ENCODE measurements at regions of chr1 and their contacts with region 1.

Region 1: GRCh38 chr1:160108888-160109662 is 6.5 kb upstream of the ATP1A2 start:
- DNase-seq: peak; percentile 69

Region 2: DNA sequence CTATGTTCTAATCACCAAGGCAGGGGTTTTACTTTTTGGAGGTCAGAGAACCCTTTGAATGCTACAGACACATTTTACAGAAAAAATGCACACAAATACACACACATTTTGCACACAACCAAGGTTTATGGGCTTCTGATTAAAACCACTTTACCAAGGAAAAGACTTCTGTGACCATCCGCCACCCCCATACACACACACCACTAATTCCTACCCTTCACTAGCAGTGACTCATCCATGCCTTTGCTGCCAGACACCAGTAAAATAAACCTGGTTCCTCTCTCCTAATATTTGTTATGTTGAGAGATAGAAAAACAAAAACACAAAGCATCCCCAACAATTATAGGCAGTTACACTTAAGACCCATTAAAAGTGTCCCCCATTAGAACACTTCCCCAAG is 90.2 kb before region 1 on chr1:
- CTCF ChIA-PET with region 1: no interaction called
- POLR2A ChIA-PET with region 1: no interaction called
- DNase-seq: no peak

Region 3: DNA sequence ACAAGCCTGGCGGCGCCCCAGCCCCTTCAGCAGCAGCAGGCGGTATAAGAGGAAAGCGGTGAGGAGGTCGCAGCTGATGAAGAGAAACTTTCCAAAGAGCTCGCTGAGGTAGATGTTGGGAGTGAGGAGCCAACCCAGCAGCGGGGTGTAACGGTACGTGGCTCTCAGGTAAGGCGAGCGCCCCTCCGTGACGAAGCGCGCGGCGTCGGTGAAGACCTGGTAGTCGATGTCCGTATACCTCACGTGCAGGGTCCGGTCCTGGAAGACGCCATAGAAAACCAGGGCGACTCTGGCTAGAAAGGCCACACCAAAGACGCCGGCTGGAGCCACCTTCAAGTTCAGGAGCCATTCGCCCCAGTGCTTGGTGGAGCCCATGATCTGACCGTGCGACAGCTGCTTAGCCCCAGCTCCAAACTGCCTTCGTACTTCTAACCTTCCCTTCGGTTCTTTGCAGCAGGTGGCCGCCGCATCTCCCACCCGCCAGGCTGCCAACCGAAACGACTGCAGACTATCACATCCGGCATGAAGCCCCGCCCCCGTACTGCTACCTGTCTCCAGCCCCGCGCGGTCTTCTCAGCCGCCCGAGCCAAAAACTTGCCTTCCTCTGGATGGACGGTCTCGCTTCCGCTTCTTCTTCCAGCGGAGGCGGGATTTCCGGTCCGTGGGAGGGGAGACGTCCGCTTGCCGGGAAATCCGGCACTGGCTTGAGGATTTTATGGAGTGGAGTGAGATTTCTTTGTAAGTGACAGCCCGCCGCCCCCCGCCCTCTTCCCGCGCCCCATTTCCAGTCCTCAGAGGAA is 77.5 kb before region 1 on chr1 and contains the start of gene PIGM:
- CTCF ChIA-PET with region 1: interaction called, 10 read pairs
- POLR2A ChIA-PET with region 1: no interaction called
- DNase-seq: peak; percentile 98

Measured in HEK293T (cell line).